PC-3 (cell line): ENCODE measurements at regions of chr10 and their contacts with region 1.

Region 1: GRCh38 chr10:3467052-3467951 is 294.7 kb upstream of the PITRM1 start:
- DNase-seq: peak; percentile 86
- ATAC-seq: peak; percentile 45
- H3K4me3 ChIP-seq: peak overlapping the region; percentile 59
- H3K27ac ChIP-seq: peak overlapping the region; percentile 100
- H3K4me1 ChIP-seq: peaks cover 55% of the 10 kb centered on the region
- H3K27me3 ChIP-seq: no peaks in the 10 kb centered on the region
- CTCF ChIP-seq: peak; percentile 77

Region 2: GRCh38 chr10:3197348-3198003 is 269.8 kb before region 1 on chr10:
- CTCF ChIA-PET with region 1: interaction called, 5 read pairs
- POLR2A ChIA-PET with region 1: no interaction called
- intact Hi-C with region 1: loop called (anchors 5 kb)
- DNase-seq: peak; percentile 74
- ATAC-seq: peak; percentile 83
- H3K4me3 ChIP-seq: peak overlapping the region; percentile 56
- H3K27ac ChIP-seq: peak overlapping the region; percentile 83
- H3K4me1 ChIP-seq: peaks cover 15% of the 10 kb centered on the region
- H3K27me3 ChIP-seq: no peaks in the 10 kb centered on the region
- CTCF ChIP-seq: peak; percentile 72

Region 3: GRCh38 chr10:3294928-3295327 is 172.4 kb before region 1 on chr10:
- CTCF ChIA-PET with region 1: interaction called, 8 read pairs
- POLR2A ChIA-PET with region 1: no interaction called
- intact Hi-C with region 1: loop called (anchors 5 kb)
- DNase-seq: peak; percentile 51
- ATAC-seq: peak; percentile 93
- H3K4me3 ChIP-seq: no peak overlapping the region
- H3K27ac ChIP-seq: no peak overlapping the region
- H3K4me1 ChIP-seq: peaks cover 13% of the 10 kb centered on the region
- H3K27me3 ChIP-seq: no peaks in the 10 kb centered on the region
- CTCF ChIP-seq: peak; percentile 45; the same call in 1 of the 2 replicates

Region 4: GRCh38 chr10:3482200-3483138 is 15.2 kb after region 1 on chr10:
- CTCF ChIA-PET with region 1: no interaction called
- POLR2A ChIA-PET with region 1: interaction called, 3 read pairs
- intact Hi-C with region 1: loop called (anchors 1 kb)
- DNase-seq: peak; percentile 86
- ATAC-seq: peak; percentile 76
- H3K4me3 ChIP-seq: peak overlapping the region; percentile 45
- H3K27ac ChIP-seq: peak overlapping the region; percentile 79
- H3K4me1 ChIP-seq: peaks cover 36% of the 10 kb centered on the region
- H3K27me3 ChIP-seq: no peaks in the 10 kb centered on the region
- CTCF ChIP-seq: no peak

Region 5: GRCh38 chr10:3516234-3516922 is 49.1 kb after region 1 on chr10:
- CTCF ChIA-PET with region 1: no interaction called
- POLR2A ChIA-PET with region 1: no interaction called
- intact Hi-C with region 1: no loop called
- DNase-seq: no peak
- ATAC-seq: no peak
- H3K4me3 ChIP-seq: no peak overlapping the region
- H3K27ac ChIP-seq: no peak overlapping the region
- H3K4me1 ChIP-seq: no peaks in the 10 kb centered on the region
- H3K27me3 ChIP-seq: no peaks in the 10 kb centered on the region
- CTCF ChIP-seq: no peak

Region 6: GRCh38 chr10:3740157-3740871 is 273.0 kb after region 1 on chr10:
- CTCF ChIA-PET with region 1: no interaction called
- POLR2A ChIA-PET with region 1: interaction called, 4 read pairs
- intact Hi-C with region 1: loop called (anchors 2 kb)
- DNase-seq: peak; percentile 83
- ATAC-seq: peak; percentile 95
- H3K4me3 ChIP-seq: no peak overlapping the region
- H3K27ac ChIP-seq: peak overlapping the region; percentile 95
- H3K4me1 ChIP-seq: peaks cover 24% of the 10 kb centered on the region
- H3K27me3 ChIP-seq: no peaks in the 10 kb centered on the region
- CTCF ChIP-seq: no peak

Region 7: GRCh38 chr10:3776796-3777571 is 309.7 kb after region 1 on chr10:
- CTCF ChIA-PET with region 1: no interaction called
- POLR2A ChIA-PET with region 1: interaction called, 15 read pairs
- intact Hi-C with region 1: loop called (anchors 1 kb)
- DNase-seq: peak; percentile 83
- ATAC-seq: peak; percentile 18
- H3K4me3 ChIP-seq: no peak overlapping the region
- H3K27ac ChIP-seq: peak overlapping the region; percentile 86
- H3K4me1 ChIP-seq: peaks cover 65% of the 10 kb centered on the region
- H3K27me3 ChIP-seq: no peaks in the 10 kb centered on the region
- CTCF ChIP-seq: no peak

Region 8: GRCh38 chr10:4195213-4195612 is 727.9 kb after region 1 on chr10:
- CTCF ChIA-PET with region 1: no interaction called
- POLR2A ChIA-PET with region 1: no interaction called
- intact Hi-C with region 1: loop called (anchors 5 kb)
- DNase-seq: peak; percentile 78
- ATAC-seq: peak; percentile 48
- H3K4me3 ChIP-seq: no peak overlapping the region
- H3K27ac ChIP-seq: peak overlapping the region; percentile 100
- H3K4me1 ChIP-seq: peaks cover 37% of the 10 kb centered on the region
- H3K27me3 ChIP-seq: no peaks in the 10 kb centered on the region
- CTCF ChIP-seq: no peak